ENCODE measurements at regions of chr7 and their contacts with region 1.

Region 1: DNA sequence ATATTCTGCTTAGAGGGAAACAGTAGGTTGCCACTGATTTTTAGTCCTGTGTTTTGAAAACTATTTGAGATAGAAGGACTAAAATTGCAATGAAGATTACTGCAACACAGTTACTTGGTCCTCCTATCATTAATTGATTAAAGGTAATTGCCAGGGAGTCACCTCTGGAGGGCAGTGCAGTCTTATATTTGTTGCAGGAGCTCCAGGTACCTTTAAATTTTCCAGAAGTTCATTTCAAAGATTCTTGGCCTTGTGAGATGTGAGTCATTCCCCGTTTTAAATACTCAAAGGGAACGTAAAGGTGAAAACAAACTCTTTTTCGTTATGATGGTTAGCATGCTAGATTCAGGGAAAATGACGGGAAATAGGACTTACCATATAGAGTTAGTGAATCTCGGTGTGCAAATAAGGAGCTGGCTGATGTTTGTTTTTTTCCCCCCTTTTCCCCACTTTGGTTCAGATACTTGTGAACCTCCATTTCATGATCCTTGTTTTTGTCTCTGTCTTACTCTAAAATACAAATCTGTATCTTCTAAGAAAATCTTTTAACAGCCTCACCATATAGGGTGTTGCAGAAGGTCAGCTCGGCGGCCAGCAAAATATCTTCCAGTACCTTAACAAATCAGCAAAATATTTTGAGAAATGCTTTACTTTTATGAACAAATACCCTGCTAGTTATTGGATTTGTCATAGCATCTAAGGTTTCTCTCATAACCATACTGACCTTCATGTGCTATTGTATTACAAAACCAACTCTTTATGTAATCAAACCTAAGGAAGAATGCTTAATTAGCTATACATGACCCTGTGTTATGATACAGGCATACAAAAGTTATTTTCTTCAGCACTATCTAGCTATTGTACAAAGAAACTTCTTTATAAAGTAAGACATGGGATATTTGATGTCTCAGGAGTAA is 143.0 kb upstream of the HDAC9 start:
- DNase-seq: peak; percentile 18 to 52
- ATAC-seq: peak in 1 of 2 experiments; percentile 82; a peak in 3 of 6 replicates
- H3K4me3 ChIP-seq: no peak overlapping the region
- H3K27ac ChIP-seq: no peak overlapping the region
- H3K4me1 ChIP-seq: no peaks in the 10 kb centered on the region
- CTCF ChIP-seq: peak; percentile 65
- EP300 ChIP-seq: no peak
- POLR2A ChIP-seq: no peak
- RAD21 ChIP-seq: peak; percentile 73 to 74

Region 2: DNA sequence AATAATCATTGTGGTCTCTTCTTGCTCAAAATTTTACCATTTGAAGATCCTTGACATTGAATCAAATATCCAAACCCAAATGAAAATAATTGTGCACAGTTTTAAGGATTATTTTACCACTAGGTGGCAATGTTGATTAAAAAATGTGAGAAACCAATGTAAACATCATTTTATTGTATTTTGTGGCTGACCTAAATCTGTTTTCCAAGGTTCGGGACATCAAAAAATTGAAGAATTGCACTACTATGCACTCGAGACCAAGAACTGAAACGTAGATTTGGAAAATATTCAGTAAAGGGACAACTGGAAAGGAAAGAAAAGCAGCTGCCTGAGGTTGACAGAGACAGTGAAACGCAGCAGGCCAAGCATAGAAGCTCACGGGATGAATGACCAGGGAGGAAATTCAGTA is 671.6 kb before region 1 on chr7:
- CTCF ChIA-PET with region 1: interaction called, 17 read pairs
- POLR2A ChIA-PET with region 1: no interaction called
- DNase-seq: peak in 1 of 2 experiments; percentile 20
- ATAC-seq: peak; percentile 33 to 59; a peak in 3 of 6 replicates
- H3K4me3 ChIP-seq: no peak overlapping the region
- H3K27ac ChIP-seq: peak overlapping the region; percentile 81 to 87
- H3K4me1 ChIP-seq: peaks cover 61% of the 10 kb centered on the region
- CTCF ChIP-seq: peak; percentile 82
- EP300 ChIP-seq: no peak
- POLR2A ChIP-seq: no peak
- RAD21 ChIP-seq: peak; percentile 83 to 94

Region 3: DNA sequence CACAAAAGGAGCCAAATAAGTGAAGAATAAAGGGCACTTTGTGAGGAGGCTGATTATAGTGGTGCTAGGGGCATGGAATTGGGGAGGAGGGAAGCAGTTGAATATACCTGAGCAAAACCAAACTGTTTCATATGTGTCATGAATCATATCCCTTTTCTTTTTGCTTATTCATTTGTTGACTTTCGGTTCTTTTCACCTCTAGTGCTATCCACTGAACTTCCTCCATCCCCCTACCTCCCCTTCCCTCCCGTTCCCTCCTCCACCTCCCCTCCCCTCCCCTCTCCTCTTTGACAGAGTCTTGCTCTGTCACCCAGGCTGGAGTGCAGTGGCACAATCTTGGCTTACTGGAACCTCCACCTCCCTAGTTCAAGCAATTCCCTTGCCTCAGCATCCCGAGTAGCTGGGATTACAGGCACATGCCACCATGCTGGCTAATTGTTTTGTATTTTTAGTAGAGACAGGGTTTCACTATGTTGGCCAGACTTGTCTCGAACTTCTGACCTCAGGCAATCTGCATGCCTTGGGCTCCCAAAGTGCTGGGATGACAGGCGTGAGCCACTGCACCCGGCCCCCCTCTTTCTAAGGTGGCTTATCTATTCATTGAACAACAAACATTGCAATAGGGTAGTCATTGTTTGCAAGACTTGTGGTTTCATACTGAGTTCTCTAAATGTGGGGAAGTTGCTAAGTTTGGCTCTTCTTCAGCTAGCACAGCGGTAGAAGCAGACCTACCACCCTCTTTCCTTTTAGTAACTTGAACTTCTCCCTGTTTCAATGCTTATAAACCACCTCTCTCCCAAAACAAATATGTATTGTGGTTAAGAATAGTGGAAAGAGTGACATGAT is 174.6 kb before region 1 on chr7:
- CTCF ChIA-PET with region 1: no interaction called
- POLR2A ChIA-PET with region 1: no interaction called
- DNase-seq: peak in 1 of 2 experiments; percentile 68
- ATAC-seq: peak; percentile 47 to 83; a peak in 4 of 6 replicates
- H3K4me3 ChIP-seq: no peak overlapping the region
- H3K27ac ChIP-seq: peak overlapping the region; percentile 60 to 61
- H3K4me1 ChIP-seq: peaks cover 40% of the 10 kb centered on the region
- CTCF ChIP-seq: no peak
- EP300 ChIP-seq: peak in 1 of 2 experiments; percentile 20; a peak in 1 of 5 replicates
- POLR2A ChIP-seq: no peak
- RAD21 ChIP-seq: no peak

Region 4: GRCh38 chr7:18364396-18364795 is 11.8 kb after region 1 on chr7:
- CTCF ChIA-PET with region 1: interaction called, 10 read pairs
- POLR2A ChIA-PET with region 1: no interaction called
- DNase-seq: no peak
- ATAC-seq: no peak
- H3K4me3 ChIP-seq: no peak overlapping the region
- H3K27ac ChIP-seq: no peak overlapping the region
- H3K4me1 ChIP-seq: no peaks in the 10 kb centered on the region
- CTCF ChIP-seq: no peak
- EP300 ChIP-seq: no peak
- POLR2A ChIP-seq: no peak
- RAD21 ChIP-seq: no peak

Region 5: DNA sequence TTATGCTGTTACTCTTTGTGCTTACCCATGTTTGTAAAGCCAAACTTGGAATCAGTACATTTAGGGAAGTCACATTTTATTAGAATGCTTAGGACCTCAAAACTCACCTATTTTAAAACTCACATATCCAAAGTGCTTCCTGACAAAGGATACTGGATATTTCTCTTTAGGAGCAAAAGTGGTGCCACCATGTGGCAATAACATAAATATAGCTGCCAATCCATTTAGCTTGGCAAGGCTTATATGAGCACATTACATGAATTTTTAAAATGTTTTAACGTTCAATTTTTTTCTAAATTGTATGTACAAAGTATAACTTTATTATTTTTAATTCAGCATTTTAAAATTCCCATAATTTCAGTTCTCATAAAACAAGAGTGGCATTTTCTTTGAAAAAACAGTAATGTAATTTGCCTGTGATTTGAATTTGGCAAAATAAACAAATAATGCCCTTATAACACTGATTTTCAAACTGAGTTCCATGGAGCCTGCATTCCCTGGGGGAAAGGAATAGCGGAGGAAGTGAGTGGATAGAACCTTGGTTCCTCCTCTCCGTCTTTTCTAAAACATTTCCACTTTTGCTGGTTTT is 218.4 kb after region 1 on chr7:
- CTCF ChIA-PET with region 1: interaction called, 115 read pairs
- POLR2A ChIA-PET with region 1: interaction called, 3 read pairs
- DNase-seq: peak; percentile 3 to 40
- ATAC-seq: peak in 1 of 2 experiments; percentile 39; a peak in 1 of 6 replicates
- H3K4me3 ChIP-seq: no peak overlapping the region
- H3K27ac ChIP-seq: no peak overlapping the region
- H3K4me1 ChIP-seq: no peaks in the 10 kb centered on the region
- CTCF ChIP-seq: peak; percentile 52
- EP300 ChIP-seq: no peak
- POLR2A ChIP-seq: no peak
- RAD21 ChIP-seq: peak; percentile 39 to 54; a peak in 4 of 5 replicates

Measured in A549 (cell line).